ENCODE measurements at regions of chr1 and their contacts with region 1.

Region 1: DNA sequence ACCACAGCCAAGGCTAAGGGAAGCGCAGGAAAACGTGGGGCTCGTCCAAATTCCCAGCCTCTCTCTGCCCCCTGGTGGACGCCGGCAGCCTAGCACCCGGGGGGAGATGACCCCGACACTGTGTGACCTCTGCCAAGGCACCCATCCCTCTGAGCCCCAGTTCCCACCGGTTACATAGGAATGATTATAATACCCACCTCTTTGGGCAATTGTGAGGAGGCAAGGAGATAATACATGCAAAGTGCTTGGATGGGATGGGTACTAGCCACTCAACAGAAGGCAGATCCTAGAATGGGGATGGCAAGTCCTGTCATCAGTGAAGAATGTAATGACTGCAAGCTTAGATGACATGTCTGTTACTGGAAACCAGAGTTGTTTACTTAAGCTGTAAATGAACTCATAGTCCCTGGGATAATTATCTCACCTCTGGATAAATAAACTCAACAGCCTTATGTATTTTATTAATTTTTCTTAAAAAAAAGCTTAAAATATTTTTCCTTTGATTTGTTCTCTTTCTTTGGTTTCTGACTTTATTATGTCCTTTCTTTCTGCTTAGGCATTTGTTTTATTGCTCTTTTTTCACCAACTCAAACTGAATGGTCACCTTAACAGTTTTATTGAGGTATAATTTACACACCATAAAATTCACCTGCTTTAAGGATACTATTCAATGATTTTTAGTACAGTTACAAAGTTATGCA is 11.3 kb upstream of the BMP8B start:
- DNase-seq: peak; percentile 73
- ATAC-seq: peak; percentile 75
- H3K4me3 Mint-ChIP-seq: peak overlapping the region; percentile 49
- H3K27ac Mint-ChIP-seq: peak overlapping the region; percentile 82
- H3K4me1 Mint-ChIP-seq: peaks cover 11% of the 10 kb centered on the region
- H3K27me3 Mint-ChIP-seq: peaks cover 6% of the 10 kb centered on the region

Region 2: DNA sequence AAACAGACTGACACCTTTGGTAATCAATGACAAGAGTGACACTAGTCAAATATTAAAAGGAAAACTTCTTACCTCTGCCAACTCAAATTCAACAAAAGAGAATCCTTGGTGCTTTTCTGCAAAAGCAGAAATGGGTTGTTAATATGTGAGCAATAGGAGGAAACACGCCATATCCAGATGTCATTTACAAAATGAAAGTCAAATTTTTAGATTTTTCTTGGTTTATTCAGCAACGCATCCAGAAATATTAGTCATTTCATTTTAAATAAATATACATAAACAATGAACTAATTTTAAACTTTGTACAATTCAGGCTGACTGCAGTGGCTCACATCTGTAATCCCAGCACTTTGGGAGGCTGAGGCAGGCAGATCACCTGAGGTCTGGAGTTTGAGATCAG is 245.6 kb before region 1 on chr1:
- CTCF ChIA-PET with region 1: no interaction called
- POLR2A ChIA-PET with region 1: no interaction called
- DNase-seq: no peak
- ATAC-seq: no peak
- H3K4me3 Mint-ChIP-seq: no peak overlapping the region
- H3K27ac Mint-ChIP-seq: no peak overlapping the region
- H3K4me1 Mint-ChIP-seq: peaks cover 17% of the 10 kb centered on the region
- H3K27me3 Mint-ChIP-seq: no peaks in the 10 kb centered on the region

Region 3: DNA sequence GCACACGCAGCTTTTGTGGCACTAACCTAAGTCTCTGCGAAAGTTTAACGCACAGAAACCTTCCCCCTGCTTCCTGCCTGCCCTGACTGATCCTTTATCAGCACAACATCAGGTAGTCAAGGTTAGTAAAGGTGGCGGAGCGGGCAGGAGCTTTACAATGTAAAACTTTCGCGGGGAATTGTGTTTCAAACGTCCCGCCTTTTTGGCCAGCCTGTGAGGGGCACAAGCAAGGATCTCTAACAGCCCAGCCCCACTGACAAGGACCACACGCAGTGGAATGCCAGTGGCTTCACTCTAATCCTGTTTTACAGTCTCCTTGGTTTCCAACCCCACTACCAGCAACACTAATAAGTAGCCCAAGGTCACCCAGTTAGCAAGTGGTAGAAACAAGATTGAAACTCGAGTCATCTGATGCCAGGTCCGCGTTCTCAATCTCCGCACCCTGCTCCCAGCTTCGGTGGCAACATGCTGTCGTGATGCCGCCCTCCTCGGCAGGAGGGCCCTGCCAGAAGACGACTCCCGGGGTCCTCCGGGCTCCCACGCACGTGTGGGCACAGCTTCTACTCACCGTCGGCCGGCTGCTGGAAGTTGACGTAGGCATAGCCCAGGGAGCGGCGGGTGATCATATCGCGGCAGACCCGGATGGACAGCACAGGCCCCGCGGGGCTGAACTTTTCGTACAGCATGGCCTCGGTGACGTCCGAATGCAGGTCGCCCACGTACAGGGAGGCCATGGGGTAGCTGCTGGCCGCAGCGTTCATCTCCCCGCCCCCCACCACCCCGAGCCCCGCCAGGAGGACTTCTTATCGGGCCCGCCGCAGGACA is 224.5 kb before region 1 on chr1:
- CTCF ChIA-PET with region 1: no interaction called
- POLR2A ChIA-PET with region 1: no interaction called
- DNase-seq: peak; percentile 63
- ATAC-seq: peak; percentile 36
- H3K4me3 Mint-ChIP-seq: peak overlapping the region; percentile 92
- H3K27ac Mint-ChIP-seq: peak overlapping the region; percentile 89
- H3K4me1 Mint-ChIP-seq: peaks cover 45% of the 10 kb centered on the region
- H3K27me3 Mint-ChIP-seq: no peaks in the 10 kb centered on the region

Region 4: DNA sequence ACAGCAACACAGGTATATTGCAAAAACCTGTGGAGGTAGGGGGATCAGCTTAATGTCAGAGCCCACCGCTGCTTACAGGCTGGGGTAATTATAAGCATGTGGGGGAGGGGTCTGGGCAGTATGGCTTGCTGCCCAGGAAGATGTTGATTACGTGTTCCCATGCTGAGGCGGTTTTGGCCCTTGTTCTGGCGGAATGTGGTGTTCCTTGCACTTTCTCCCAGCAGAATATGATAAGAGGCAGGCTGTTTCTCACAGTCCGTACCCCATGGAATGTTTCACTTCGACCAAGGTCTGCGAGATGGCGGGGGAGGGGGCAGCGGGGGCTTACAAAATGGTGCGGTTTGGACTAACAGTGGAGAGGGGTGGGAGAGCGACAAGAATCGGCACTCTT is 98.9 kb before region 1 on chr1:
- CTCF ChIA-PET with region 1: interaction called, 12 read pairs
- POLR2A ChIA-PET with region 1: interaction called, 3 read pairs
- DNase-seq: no peak
- ATAC-seq: no peak
- H3K4me3 Mint-ChIP-seq: no peak overlapping the region
- H3K27ac Mint-ChIP-seq: no peak overlapping the region
- H3K4me1 Mint-ChIP-seq: no peaks in the 10 kb centered on the region
- H3K27me3 Mint-ChIP-seq: peaks cover 34% of the 10 kb centered on the region

Region 5: GRCh38 chr1:39788758-39789570 is 11.0 kb before region 1 on chr1 and contains the start of gene BMP8B:
- CTCF ChIA-PET with region 1: interaction called, 19 read pairs
- POLR2A ChIA-PET with region 1: no interaction called
- DNase-seq: peak; percentile 50
- ATAC-seq: peak; percentile 78
- H3K4me3 Mint-ChIP-seq: peak within 1 kb of the TSS; percentile 58
- H3K27ac Mint-ChIP-seq: no peak within 1 kb of the TSS
- H3K4me1 Mint-ChIP-seq: peaks cover 14% of the 10 kb centered on the region
- H3K27me3 Mint-ChIP-seq: peaks cover 33% of the 10 kb centered on the region
- total RNA-seq, gene BMP8B: 0.08 to 0.26 TPM

Region 6: GRCh38 chr1:39845275-39846116 is 45.6 kb after region 1 on chr1:
- CTCF ChIA-PET with region 1: interaction called, 28 read pairs
- POLR2A ChIA-PET with region 1: no interaction called
- DNase-seq: peak; percentile 63
- ATAC-seq: peak; percentile 86
- H3K4me3 Mint-ChIP-seq: no peak overlapping the region
- H3K27ac Mint-ChIP-seq: peak overlapping the region; percentile 73
- H3K4me1 Mint-ChIP-seq: peaks cover 38% of the 10 kb centered on the region
- H3K27me3 Mint-ChIP-seq: no peaks in the 10 kb centered on the region

Region 7: DNA sequence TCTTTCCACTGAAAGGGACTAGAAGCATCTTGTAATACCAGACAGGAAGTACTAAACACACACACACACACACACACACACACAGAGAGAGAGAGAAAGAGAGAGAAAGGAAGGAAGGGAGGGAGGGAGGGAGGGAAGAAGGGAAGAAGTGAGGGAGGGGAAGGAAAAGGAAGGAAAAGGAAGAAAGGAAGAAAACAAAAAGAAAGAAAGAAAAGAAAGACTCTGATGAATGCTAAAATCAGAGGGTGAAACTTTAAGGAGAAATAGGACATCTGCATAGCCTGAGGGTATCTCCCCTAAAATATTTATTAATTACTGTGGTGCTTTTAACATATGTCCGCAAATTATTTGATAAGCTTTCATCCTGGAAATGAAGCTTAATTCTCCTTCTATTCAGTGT is 72.8 kb after region 1 on chr1:
- CTCF ChIA-PET with region 1: no interaction called
- POLR2A ChIA-PET with region 1: no interaction called
- DNase-seq: no peak
- ATAC-seq: no peak
- H3K4me3 Mint-ChIP-seq: no peak overlapping the region
- H3K27ac Mint-ChIP-seq: no peak overlapping the region
- H3K4me1 Mint-ChIP-seq: peaks cover 23% of the 10 kb centered on the region
- H3K27me3 Mint-ChIP-seq: no peaks in the 10 kb centered on the region